ENCODE measurements at regions of chr1 and their contacts with region 1.

Region 1: DNA sequence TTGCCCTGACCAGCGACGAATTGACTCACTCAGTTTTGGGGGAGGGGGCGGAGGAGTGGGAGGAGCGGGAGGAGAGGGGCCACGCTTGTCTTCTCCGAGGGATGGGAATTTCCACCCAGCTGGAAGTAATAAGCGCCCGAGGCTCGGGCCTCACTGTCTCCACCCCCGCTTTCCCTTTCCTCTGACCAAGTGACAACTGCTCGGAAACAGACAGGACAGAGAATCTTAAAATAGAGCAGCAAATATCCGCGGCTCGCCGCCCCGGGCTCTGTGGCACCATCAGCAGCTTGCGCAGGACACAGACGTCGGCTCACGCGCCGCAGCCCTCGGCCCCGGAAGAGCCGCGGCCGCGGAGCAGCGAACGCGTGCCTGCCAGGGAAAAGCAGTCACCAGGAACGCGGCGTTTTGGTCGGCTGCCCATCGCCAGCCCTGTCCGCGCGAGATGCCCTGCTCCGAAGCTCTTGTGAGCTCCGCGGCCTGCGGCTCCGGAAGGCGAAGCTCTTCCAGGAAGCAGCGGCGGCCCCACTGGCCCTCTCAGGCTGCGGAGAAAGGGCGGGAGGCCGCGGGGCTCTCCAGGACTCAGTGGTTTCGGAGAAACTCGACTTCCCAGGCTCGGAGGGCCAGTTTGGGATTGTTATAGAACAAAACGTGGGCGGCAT is 10.7 kb upstream of the RGS16 start:
- DNase-seq: peak; percentile 52
- H3K4me3 Mint-ChIP-seq: peak overlapping the region; percentile 66
- H3K27ac Mint-ChIP-seq: peak overlapping the region; percentile 79
- H3K4me1 Mint-ChIP-seq: peaks cover 45% of the 10 kb centered on the region
- H3K27me3 Mint-ChIP-seq: peaks cover 78% of the 10 kb centered on the region

Region 2: GRCh38 chr1:182595641-182596240 is 19.2 kb before region 1 on chr1:
- CTCF ChIA-PET with region 1: interaction called, 15 read pairs
- POLR2A ChIA-PET with region 1: no interaction called
- DNase-seq: peak; percentile 68
- H3K4me3 Mint-ChIP-seq: no peak overlapping the region
- H3K27ac Mint-ChIP-seq: no peak overlapping the region
- H3K4me1 Mint-ChIP-seq: peaks cover 4% of the 10 kb centered on the region
- H3K27me3 Mint-ChIP-seq: peaks cover 15% of the 10 kb centered on the region

Region 3: DNA sequence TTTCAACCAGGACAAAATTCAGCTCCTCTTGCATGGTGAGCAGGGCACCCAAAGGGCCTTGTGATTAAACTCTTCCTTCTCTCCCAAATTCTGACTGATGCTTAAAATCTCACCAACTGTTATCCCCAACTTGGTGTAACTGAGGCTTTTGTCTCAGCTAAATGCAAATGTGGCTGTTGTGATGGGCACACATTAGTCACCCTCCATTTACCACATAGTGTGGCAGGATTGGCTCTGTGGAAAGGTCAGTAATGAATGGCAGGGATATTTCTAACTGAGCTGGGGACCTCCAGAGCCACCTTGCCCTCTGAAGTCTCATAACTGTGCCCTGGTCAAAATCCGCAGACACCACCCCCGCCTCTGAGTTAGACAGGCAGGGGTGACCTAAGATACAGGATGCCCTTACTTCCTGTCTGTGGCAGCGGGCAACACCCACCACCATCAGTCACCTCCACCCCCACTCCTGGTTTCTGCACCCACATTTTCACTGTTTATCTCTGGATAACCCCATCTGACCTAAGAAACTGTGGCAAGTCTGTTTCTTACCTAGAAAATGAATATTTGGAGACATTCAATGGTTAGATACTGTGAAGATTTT is 14.7 kb after region 1 on chr1:
- CTCF ChIA-PET with region 1: interaction called, 7 read pairs
- POLR2A ChIA-PET with region 1: interaction called, 41 read pairs
- DNase-seq: peak; percentile 64
- H3K4me3 Mint-ChIP-seq: no peak overlapping the region
- H3K27ac Mint-ChIP-seq: no peak overlapping the region
- H3K4me1 Mint-ChIP-seq: peaks cover 60% of the 10 kb centered on the region
- H3K27me3 Mint-ChIP-seq: peaks cover 23% of the 10 kb centered on the region

Region 4: GRCh38 chr1:182640568-182640967 is 25.6 kb after region 1 on chr1:
- CTCF ChIA-PET with region 1: no interaction called
- POLR2A ChIA-PET with region 1: no interaction called
- DNase-seq: no peak
- H3K4me3 Mint-ChIP-seq: no peak overlapping the region
- H3K27ac Mint-ChIP-seq: no peak overlapping the region
- H3K4me1 Mint-ChIP-seq: no peaks in the 10 kb centered on the region
- H3K27me3 Mint-ChIP-seq: peaks cover 17% of the 10 kb centered on the region

Region 5: DNA sequence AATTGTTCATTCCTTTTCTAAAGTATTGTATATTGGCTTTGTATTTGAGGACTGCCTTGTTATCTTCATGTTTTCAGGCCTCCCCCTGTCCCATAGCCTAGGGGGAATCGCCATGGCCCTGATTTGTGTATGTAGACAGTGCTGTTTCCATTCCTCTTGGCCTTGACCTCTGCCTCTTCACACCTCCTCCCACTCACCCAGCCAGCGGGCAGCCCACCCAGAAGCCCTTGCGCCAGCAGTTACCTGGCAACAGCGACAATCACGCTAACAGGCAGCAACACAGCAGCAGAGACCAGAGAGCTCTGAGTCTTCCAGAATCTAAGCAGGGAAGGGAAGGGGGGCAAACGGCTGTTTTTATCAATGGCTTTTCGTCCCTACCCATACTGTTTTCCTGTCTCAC is 124.6 kb after region 1 on chr1:
- CTCF ChIA-PET with region 1: no interaction called
- POLR2A ChIA-PET with region 1: no interaction called
- DNase-seq: no peak
- H3K4me3 Mint-ChIP-seq: no peak overlapping the region
- H3K27ac Mint-ChIP-seq: no peak overlapping the region
- H3K4me1 Mint-ChIP-seq: no peaks in the 10 kb centered on the region
- H3K27me3 Mint-ChIP-seq: peaks cover 2% of the 10 kb centered on the region

Region 6: GRCh38 chr1:182781841-182782586 is 167.1 kb after region 1 on chr1:
- CTCF ChIA-PET with region 1: interaction called, 13 read pairs
- POLR2A ChIA-PET with region 1: interaction called, 3 read pairs
- DNase-seq: peak; percentile 76
- H3K4me3 Mint-ChIP-seq: no peak overlapping the region
- H3K27ac Mint-ChIP-seq: no peak overlapping the region
- H3K4me1 Mint-ChIP-seq: peaks cover 9% of the 10 kb centered on the region
- H3K27me3 Mint-ChIP-seq: peaks cover 11% of the 10 kb centered on the region

Measured in activated CD4-positive, alpha-beta memory T cell treated with anti-CD3 and anti-CD28 coated beads, Interleukin-2, amount 10 ng/mL, durations not matched to agents 7 days and 5 days (primary cell).